ENCODE measurements at regions of chr14 and their contacts with region 1.

Region 1: GRCh38 chr14:89509891-89510290 is 92.9 kb upstream of the FOXN3 start:
- DNase-seq: no peak
- H3K4me3 Mint-ChIP-seq: peak overlapping the region; percentile 81
- H3K27ac Mint-ChIP-seq: peak overlapping the region; percentile 96
- H3K4me1 Mint-ChIP-seq: peaks cover 56% of the 10 kb centered on the region
- H3K27me3 Mint-ChIP-seq: no peaks in the 10 kb centered on the region

Region 2: DNA sequence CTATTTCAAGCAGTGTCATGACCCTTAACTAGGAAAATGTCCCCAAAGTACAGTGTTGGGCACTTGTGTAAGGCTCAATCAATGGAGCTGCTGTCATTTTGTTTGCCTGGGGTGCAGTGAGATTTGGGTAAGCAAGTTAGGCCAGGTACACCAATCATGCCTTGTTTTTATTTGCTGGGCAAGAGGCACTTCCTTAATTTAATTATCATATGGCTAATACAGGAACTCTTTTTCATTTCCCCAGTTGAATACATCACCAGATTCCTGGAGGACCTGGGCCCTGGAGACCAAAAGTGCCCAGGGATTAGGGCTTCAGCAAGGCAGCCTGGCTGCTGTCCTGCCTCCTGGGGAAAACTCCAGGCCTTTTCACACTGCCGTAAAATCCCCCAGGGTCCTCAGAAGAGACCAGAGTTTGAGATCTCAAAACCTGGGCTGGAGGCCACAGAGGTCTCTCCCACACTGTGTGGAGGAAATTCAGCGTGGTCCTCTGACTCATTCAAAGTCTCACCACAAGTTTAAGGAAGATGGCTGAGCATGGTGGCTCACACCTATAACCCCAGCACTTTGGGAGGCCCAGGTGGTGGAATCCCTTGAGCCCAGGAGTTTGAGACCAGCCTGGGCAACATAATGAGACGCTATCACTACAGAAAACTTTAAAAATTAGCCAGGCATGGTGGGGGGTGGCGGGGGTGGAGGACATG is 64.5 kb before region 1 on chr14:
- intact Hi-C with region 1: loop called (anchors 2 kb)
- DNase-seq: peak; percentile 71
- H3K4me3 Mint-ChIP-seq: peak overlapping the region; percentile 55
- H3K27ac Mint-ChIP-seq: peak overlapping the region; percentile 85
- H3K4me1 Mint-ChIP-seq: peaks cover 44% of the 10 kb centered on the region
- H3K27me3 Mint-ChIP-seq: no peaks in the 10 kb centered on the region

Region 3: GRCh38 chr14:89701211-89702043 is 191.5 kb after region 1 on chr14:
- intact Hi-C with region 1: loop called (anchors 2 kb)
- DNase-seq: peak; percentile 95
- H3K4me3 Mint-ChIP-seq: peak overlapping the region; percentile 76
- H3K27ac Mint-ChIP-seq: peak overlapping the region; percentile 88
- H3K4me1 Mint-ChIP-seq: peaks cover 34% of the 10 kb centered on the region
- H3K27me3 Mint-ChIP-seq: no peaks in the 10 kb centered on the region

Measured in activated CD4-positive, alpha-beta T cell treated with anti-CD3 and anti-CD28 coated beads, Interleukin-2, amount 10 ng/mL, durations not matched to agents 24 days and 14 days (primary cell).